Cardiac septum (tissue), 1 donor: ENCODE measurements at regions of chr14 and their contacts with region 1.

Region 1: DNA sequence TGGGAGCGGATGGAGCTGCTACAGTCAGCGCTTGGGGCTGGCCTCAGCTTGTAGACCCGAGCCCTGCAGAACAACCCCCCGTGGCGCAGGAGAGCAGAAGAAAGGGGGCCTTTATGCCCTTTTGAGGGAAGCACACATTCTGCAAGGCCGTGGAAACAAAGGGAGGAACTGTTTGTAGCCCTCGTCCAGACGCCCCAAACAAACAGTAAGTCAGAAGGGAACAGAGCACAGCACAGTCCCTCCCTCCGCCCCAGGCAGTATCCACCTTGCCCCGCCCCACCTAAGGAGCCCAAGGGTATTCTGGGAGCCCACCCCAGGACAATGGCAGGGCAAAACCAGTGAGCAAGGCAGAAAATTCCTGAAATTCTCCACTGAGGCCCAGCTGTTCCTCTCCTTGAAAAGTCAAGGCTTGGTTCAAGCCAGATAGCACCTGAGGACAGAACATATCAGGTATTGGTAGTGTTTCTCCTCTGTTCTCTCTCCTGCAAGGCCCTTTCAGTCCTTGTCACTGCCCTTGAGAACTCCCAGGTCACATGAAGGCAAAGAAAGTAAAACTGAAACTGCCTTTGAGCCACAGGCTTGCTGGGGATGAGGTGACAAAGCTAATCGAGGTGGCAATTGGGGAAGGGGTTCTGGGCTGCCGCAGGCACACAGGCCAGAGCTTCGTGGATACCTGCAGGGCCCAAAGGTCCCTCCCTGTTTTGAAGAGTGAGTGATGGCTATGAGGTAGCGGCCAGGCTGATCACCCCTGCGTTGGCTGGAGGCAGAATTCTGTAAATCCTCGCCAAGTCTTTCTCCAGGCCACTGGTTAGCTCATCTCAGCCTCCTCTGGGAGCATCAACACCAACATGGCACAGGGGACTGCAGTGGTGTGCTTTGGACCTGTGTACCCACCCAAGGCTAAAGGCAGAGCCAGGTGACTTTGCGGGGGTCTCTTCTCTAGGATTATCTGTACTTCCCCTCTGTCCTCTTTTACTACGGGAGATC is 499 bp downstream of the DGLUCY start:
- DNase-seq: peak; percentile 93

Region 2: DNA sequence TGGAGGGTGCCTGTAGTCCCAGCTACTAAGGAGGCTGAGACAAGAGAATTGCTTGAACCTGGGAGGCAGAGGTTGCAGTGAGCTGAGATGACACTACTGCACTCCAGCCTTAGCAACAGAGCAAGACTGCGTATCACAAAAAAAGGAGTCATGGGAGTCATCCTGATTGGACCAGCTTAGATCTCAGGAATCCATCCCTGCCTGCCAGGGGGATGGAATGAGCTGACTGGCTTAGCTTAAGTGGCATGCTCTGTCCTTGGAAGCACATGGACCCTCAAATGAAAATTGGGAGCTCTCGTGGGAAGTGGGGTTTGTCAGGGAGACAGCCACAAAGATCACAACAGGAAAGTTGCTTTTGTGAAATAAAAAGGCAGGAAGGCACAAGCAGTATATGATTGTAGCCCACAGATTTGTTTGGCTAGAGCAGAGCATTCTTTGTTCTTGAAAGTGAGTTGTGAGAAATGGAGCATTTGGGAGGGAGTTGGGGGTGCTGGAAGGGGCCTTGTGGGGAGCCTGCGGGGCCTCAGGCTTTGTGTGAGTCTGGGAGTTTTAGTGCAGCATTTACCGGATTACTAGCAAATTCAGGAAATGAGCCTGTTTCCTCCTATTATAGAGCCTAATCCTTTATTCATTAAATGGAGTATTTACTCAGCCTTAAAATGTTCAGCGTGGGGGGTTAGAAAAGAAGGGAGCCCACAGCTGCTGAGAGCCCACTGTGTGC is 30.2 kb after region 1 on chr14:
- intact Hi-C with region 1: loop called (anchors 2 kb)
- DNase-seq: no peak